ENCODE measurements at regions of chr18 and their contacts with region 1.

Region 1: DNA sequence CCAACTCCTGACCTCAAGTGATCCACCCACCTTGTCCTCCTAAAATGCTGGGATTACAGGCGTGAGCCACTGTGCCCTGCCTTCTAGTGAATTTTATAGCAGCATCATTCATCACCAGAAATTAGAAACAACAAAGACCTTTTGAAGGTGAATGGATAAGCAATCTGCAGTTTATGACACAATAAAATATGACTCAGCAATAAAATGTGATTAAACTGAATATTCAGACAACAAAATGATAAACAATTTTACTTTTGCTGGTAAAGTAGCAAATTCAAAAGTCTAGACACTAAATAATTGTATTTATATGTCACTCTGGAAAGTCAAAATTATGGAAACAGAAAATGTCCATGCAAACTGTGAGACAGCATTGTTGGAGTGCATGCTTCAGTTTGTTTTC is 656.6 kb downstream of the CBLN2 start:
- DNase-seq: no peak
- ATAC-seq: peak; percentile 43; the same call in 1 of the 2 replicates
- H3K4me3 ChIP-seq: no peak overlapping the region
- H3K27ac ChIP-seq: no peak overlapping the region
- H3K4me1 ChIP-seq: no peaks in the 10 kb centered on the region
- H3K27me3 ChIP-seq: no peaks in the 10 kb centered on the region
- CTCF ChIP-seq: no peak

Region 2: GRCh38 chr18:72013427-72013850 is 125.9 kb after region 1 on chr18:
- CTCF ChIA-PET with region 1: no interaction called
- POLR2A ChIA-PET with region 1: no interaction called
- intact Hi-C with region 1: loop called (anchors 10 kb)
- DNase-seq: peak; percentile 50
- ATAC-seq: peak; percentile 92
- H3K4me3 ChIP-seq: no peak overlapping the region
- H3K27ac ChIP-seq: no peak overlapping the region
- H3K4me1 ChIP-seq: no peaks in the 10 kb centered on the region; the same call in 1 of the 2 replicates
- H3K27me3 ChIP-seq: no peaks in the 10 kb centered on the region
- CTCF ChIP-seq: peak; percentile 19; the same call in 1 of the 2 replicates

Region 3: DNA sequence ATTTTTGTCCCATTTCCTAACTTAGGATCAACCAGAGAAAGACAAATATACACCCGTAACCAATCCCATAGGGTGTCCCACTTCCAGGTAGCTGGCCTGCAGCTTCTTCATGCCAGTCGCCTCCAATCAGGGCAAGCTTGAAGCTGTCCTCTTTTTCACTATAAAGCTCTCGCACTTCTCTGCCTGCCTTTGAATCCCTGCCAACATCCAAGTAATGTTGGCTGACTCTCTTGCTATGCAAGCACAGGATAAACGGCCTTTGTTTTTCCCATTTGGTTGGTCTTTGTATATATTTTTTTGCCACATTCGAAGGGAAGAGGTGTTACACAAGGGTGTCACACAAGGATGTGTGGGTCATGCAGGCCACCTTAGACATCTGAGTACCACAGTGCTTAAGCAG is 267.8 kb after region 1 on chr18:
- CTCF ChIA-PET with region 1: no interaction called
- POLR2A ChIA-PET with region 1: no interaction called
- intact Hi-C with region 1: no loop called
- DNase-seq: no peak
- ATAC-seq: no peak
- H3K4me3 ChIP-seq: no peak overlapping the region
- H3K27ac ChIP-seq: no peak overlapping the region
- H3K4me1 ChIP-seq: no peaks in the 10 kb centered on the region
- H3K27me3 ChIP-seq: no peaks in the 10 kb centered on the region
- CTCF ChIP-seq: no peak